Mammary epithelial cell (primary cell): ENCODE measurements at regions of chr15 and their contacts with region 1.

Region 1: DNA sequence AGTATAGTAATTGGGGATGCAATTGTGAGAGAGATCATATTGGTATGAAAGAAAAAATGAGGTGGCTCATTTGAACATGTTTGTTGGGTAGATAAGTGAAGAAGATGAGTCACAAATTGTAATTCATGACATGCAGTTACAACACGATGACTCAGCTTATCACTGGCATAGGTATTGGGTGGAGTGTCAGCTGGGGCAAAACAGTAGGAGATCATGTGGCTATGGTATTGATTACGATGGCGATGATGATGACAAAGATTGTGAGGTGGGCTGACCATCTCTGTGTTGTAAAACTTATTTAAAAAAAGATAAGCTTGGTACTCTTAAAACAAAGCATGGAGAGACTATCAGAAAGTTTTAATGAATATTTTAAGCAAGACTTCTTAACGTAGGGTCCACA is 11.6 kb upstream of the DPH6 start:
- DNase-seq: peak; percentile 83
- H3K4me3 ChIP-seq: no peak overlapping the region
- H3K27ac ChIP-seq: peak overlapping the region; percentile 18
- H3K4me1 ChIP-seq: peaks cover 11% of the 10 kb centered on the region
- H3K27me3 ChIP-seq: no peaks in the 10 kb centered on the region
- CTCF ChIP-seq: no peak

Region 2: DNA sequence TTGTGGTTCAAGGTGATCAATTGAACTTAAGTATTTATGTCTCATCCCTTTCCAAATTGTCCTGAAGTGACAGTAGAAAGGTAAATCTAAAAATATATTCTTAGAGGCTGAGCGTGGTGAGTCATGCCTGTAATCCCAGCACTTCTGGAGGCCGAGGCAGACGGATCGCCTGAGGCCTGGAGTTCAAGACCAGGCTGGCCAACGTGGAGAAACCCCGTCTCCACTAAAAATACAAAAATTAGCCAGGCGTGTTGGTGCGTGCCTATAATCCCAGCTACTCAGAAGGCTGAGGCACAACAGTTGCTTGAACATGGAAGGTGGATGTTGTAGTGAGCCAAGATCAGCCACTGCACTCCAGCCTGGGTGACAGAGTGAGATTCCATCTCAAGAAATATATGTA is 238.2 kb before region 1 on chr15:
- CTCF ChIA-PET with region 1: no interaction called
- dilution Hi-C with region 1: no loop called
- in situ Hi-C with region 1: no loop called
- intact Hi-C with region 1: no loop called
- DNase-seq: peak; percentile 80
- H3K4me3 ChIP-seq: no peak overlapping the region
- H3K27ac ChIP-seq: no peak overlapping the region
- H3K4me1 ChIP-seq: peaks cover 10% of the 10 kb centered on the region
- H3K27me3 ChIP-seq: no peaks in the 10 kb centered on the region
- CTCF ChIP-seq: no peak

Region 3: DNA sequence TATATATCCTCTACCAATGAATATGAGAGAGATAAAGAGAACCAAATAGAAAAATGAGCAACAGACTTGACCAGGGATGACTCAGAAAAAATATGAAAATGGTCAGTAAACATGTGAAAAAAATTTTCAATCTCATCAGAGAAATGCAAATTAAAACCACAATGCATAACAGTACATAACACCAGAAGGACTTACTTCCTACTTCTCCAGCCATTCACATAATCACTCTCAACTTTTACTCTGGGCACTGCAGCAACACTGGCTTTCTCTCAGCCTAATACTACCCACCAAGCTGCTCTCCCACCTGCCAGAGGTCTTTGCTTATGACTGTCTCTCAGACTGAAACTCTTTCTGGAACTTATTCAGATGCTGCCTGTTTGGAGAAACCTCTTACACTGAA is 61.0 kb before region 1 on chr15:
- CTCF ChIA-PET with region 1: no interaction called
- dilution Hi-C with region 1: no loop called
- in situ Hi-C with region 1: no loop called
- intact Hi-C with region 1: no loop called
- DNase-seq: no peak
- H3K4me3 ChIP-seq: no peak overlapping the region
- H3K27ac ChIP-seq: no peak overlapping the region
- H3K4me1 ChIP-seq: peaks cover 8% of the 10 kb centered on the region
- H3K27me3 ChIP-seq: no peaks in the 10 kb centered on the region
- CTCF ChIP-seq: no peak

Region 4: DNA sequence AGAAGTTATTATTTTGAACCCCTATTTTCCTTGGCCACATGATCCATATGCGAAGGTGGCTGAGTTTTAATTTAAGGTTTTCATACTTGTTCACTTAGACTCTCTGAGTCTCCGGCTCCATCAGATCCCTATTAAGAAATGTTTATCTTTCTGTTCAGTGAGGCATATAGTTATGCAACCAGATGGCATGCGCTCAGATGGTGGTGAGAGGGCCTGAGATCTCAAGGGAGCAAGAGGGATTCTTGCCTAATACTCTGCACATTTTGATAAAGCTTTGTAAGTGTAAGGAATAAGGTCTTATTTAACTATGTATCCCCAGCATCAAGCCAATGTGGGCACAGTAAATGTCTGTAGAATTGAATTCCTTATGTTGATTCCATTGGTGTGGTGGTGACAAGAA is 67.3 kb after region 1 on chr15:
- CTCF ChIA-PET with region 1: no interaction called
- dilution Hi-C with region 1: no loop called
- in situ Hi-C with region 1: no loop called
- intact Hi-C with region 1: no loop called
- DNase-seq: peak; percentile 26
- H3K4me3 ChIP-seq: no peak overlapping the region
- H3K27ac ChIP-seq: no peak overlapping the region
- H3K4me1 ChIP-seq: no peaks in the 10 kb centered on the region
- H3K27me3 ChIP-seq: no peaks in the 10 kb centered on the region
- CTCF ChIP-seq: no peak

Region 5: GRCh38 chr15:35713733-35714132 is 156.2 kb after region 1 on chr15:
- CTCF ChIA-PET with region 1: no interaction called
- dilution Hi-C with region 1: no loop called
- in situ Hi-C with region 1: no loop called
- intact Hi-C with region 1: no loop called
- DNase-seq: peak; percentile 95
- H3K4me3 ChIP-seq: no peak overlapping the region
- H3K27ac ChIP-seq: peak overlapping the region; percentile 48
- H3K4me1 ChIP-seq: peaks cover 9% of the 10 kb centered on the region
- H3K27me3 ChIP-seq: no peaks in the 10 kb centered on the region
- CTCF ChIP-seq: no peak

Region 6: DNA sequence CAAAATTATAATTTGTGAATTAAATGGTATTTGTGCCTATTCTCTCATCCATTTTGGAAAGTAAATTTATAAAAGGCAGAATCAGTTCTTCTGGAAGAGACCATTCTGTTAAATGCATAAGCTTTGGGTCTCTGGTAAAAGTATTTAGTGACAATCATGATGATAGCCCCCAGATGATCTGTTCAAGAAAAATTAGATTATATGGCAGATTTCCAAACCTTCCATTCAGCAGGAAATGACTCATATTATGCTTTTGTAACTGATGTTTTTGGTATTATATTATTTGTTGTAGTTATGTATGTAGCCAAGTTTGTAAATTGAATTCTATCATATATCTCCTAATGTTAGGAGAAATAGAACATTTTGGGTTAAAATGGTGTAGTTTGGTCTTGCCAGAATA is 329.2 kb after region 1 on chr15:
- CTCF ChIA-PET with region 1: no interaction called
- dilution Hi-C with region 1: no loop called
- in situ Hi-C with region 1: loop called in 1 of 2 experiments (anchors 25 kb)
- intact Hi-C with region 1: no loop called
- DNase-seq: peak; percentile 26
- H3K4me3 ChIP-seq: no peak overlapping the region
- H3K27ac ChIP-seq: no peak overlapping the region
- H3K4me1 ChIP-seq: peaks cover 21% of the 10 kb centered on the region
- H3K27me3 ChIP-seq: no peaks in the 10 kb centered on the region
- CTCF ChIP-seq: no peak